ENCODE measurements at regions of chr7 and their contacts with region 1.

Region 1: DNA sequence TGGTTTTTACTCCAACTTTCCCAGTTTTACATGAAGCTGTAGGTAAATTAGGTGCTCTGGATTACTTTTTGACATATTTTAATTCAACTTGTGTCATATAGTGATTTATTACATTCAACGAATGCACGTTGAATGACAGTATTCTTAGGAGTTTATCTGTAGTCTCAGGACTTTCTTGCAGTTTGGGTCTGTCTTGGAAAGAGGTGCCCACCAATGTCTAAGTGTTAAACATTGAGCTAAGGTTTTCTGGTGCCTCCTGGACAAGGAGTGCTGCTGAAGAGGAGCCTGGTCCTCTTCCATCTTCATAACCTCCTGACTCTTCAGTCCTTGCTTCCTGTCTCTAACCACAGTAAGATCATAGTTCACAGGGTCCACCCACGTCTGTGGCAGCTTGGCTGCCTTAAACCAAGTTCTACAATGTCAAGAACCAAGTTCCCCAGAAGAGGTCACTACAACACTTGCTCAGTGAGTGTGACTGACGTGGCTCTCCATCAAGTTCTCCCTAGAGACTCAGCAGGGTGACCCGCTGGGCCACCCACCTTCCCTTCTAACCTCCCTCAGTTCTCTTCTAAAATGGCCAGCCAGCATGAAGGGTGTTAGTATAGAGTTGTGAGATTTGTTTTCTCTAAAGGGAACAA is 6.1 kb downstream of the NPY start:
- DNase-seq: peak; percentile 86
- ATAC-seq: peak; percentile 97
- H3K4me3 Mint-ChIP-seq: no peak overlapping the region
- H3K27ac Mint-ChIP-seq: no peak overlapping the region
- H3K4me1 Mint-ChIP-seq: peaks cover 11% of the 10 kb centered on the region
- H3K27me3 Mint-ChIP-seq: peaks cover 32% of the 10 kb centered on the region
- CTCF ChIP-seq: peak; percentile 49

Region 2: GRCh38 chr7:24665564-24666294 is 375.6 kb after region 1 on chr7:
- CTCF ChIA-PET with region 1: interaction called, 12 read pairs
- POLR2A ChIA-PET with region 1: no interaction called
- intact Hi-C with region 1: loop called (anchors 10 kb)
- DNase-seq: peak; percentile 61
- ATAC-seq: peak; percentile 56
- H3K4me3 Mint-ChIP-seq: no peak overlapping the region
- H3K27ac Mint-ChIP-seq: no peak overlapping the region
- H3K4me1 Mint-ChIP-seq: peaks cover 4% of the 10 kb centered on the region
- H3K27me3 Mint-ChIP-seq: no peaks in the 10 kb centered on the region
- CTCF ChIP-seq: peak; percentile 82